Activated naive CD4-positive, alpha-beta T cell treated with anti-CD3 and anti-CD28 coated beads, Interleukin-2, amount 10 ng/mL, durations not matched to agents 7 days and 5 days (primary cell): ENCODE measurements at regions of chr5 and their contacts with region 1.

Region 1: GRCh38 chr5:137778772-137779564 is 24.8 kb upstream of the HNRNPA0 start:
- DNase-seq: no peak
- H3K4me3 Mint-ChIP-seq: no peak overlapping the region
- H3K27ac Mint-ChIP-seq: no peak overlapping the region
- H3K4me1 Mint-ChIP-seq: no peaks in the 10 kb centered on the region
- H3K27me3 Mint-ChIP-seq: peaks cover 6% of the 10 kb centered on the region

Region 2: DNA sequence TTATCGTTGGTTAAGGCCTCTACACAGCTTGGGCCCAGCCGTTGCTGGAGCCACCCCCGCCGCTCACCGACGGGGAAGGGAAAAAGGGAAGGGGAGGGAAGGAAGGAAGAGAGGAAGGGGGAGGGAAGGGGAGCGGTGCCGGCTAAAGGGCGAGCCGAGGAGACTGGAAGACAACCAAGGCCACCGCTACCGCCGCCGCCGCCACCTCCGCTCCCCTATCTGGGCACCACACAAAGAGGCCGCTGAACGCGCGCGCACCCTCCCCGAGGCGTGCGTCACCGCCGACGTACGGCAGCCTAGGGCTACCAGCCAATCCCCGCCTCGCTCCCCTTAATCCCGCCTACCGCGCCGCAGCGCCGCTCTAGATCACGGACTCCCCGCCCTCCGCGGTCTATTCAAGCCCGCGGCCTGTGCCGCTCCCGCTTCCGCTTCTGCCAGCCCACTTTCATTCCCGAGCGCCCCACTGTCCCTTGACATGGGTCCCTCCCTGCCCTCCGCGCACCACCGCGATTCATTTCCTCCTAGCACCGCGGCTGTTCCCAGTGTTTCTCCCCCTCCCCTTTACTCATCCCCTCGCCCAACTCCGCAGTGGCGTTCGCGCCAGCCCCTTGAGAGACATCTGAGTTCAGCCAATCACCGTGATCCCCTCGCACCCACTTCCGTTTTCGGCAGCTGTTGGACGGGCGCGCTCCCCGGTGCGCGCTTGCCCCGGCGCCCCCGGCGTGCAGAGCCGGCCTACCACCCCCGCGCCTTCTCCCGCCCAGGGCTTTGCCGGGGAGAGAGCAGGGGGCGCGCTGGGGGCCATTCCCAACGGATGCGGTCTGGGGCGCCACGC is 24.6 kb before region 1 on chr5 and contains the start of gene HNRNPA0:
- CTCF ChIA-PET with region 1: interaction called, 10 read pairs
- DNase-seq: peak; percentile 97
- H3K4me3 Mint-ChIP-seq: peak within 1 kb of the TSS; percentile 96
- H3K27ac Mint-ChIP-seq: peak within 1 kb of the TSS; percentile 100
- H3K4me1 Mint-ChIP-seq: peaks cover 31% of the 10 kb centered on the region
- H3K27me3 Mint-ChIP-seq: peaks cover 14% of the 10 kb centered on the region

Region 3: DNA sequence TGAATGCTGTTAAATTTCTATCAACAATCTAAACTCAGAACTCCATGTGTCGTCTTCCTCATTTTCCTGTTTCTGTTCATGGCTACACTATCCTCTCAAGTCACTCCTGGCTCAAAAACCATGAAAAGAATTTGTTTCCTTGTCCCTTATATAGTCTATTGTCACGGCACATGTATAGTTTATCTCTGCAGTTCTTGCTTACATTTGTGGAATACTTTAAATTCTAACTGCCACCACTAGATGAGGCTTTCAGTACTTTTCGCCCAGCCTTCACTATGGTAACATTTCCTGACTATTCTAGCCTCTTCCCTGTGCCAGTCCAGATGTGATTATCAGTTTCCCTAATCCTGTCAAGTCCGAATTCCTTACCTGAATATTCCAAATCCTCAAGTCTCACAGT is 144.9 kb after region 1 on chr5:
- CTCF ChIA-PET with region 1: no interaction called
- DNase-seq: no peak
- H3K4me3 Mint-ChIP-seq: no peak overlapping the region
- H3K27ac Mint-ChIP-seq: no peak overlapping the region
- H3K4me1 Mint-ChIP-seq: no peaks in the 10 kb centered on the region
- H3K27me3 Mint-ChIP-seq: no peaks in the 10 kb centered on the region